Heart left ventricle (tissue), 16 donors: ENCODE measurements at regions of chr2 and their contacts with region 1.

Region 1: DNA sequence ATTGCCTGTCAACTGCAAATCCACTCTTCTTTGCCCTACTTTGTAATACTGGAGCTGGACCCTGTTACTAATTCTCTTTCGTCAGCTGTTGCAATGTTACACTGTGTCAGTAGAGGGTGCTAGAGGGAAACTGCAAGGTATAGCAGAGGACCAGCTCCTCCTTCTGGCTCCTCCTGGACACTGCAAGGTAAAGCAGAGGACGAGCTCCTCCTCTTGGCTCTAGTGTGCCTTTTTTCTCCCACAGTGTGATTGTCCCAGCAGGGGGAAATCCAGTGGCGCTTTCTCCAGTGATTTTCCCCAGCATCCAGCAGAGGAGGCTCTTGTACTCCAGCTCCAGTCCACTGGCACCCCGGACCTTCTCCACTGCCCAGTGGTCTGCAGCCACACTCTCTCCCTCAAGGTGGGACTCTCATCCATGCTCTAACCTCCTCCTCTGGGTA is 95.6 kb downstream of the CAPN13 start:
- DNase-seq: peak; percentile 84 to 89 (median 85)
- ATAC-seq: peak; percentile 28 to 80 (median 74)
- H3K4me3 ChIP-seq: no peak overlapping the region
- H3K27ac ChIP-seq: no peak overlapping the region
- H3K4me1 ChIP-seq: peaks cover 0 to 20% (median 4%) of the 10 kb centered on the region in 12 donors
- H3K27me3 ChIP-seq: no peaks in the 10 kb centered on the region
- CTCF ChIP-seq: peak; percentile 97 to 100 (median 99)
- POLR2A ChIP-seq: no peak

Region 2: DNA sequence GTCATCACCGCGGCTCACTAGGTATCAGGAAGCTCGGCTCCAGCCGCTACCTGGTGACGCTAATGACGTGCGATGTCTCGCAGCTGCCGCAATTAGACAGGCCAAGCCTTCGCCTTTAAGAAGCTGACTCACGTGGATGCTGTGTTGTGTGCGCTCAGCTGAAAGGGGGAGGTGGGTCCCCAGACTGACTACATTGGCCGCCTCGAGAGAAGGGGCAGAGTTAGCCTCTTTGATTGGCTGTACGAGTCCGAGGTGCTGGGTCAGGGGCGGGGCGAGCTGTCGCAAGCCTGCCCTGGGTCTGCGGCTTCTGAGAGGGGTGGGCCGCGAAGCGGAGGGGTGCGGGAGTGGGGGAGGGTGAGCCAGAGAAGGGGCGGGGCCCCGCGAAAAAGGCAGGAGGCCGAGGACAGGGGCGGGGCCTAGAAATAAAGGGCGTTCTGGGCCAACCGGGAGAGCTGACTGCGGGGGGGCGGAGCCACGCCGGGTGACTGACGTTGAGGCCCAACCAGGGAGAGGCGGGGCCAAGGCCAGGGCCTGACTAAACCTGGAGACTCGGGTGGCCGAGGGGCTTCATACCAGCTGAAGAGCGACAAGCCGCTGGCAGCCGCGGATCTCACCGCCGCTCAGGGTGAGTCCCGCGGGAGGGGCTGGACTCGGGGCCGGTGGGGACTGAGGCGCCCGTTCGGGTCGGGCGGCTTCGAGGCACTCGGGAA is 565.1 kb before region 1 on chr2 and contains the start of gene YPEL5:
- intact Hi-C with region 1: no loop called
- DNase-seq: peak; percentile 99 to 100 (median 99)
- ATAC-seq: peak; percentile 96 to 99 (median 98)
- H3K4me3 ChIP-seq: peak within 1 kb of the TSS; percentile 72 to 99 (median 96)
- H3K27ac ChIP-seq: peak within 1 kb of the TSS; percentile 93 to 100 (median 99)
- H3K4me1 ChIP-seq: peaks cover 5 to 45% (median 39%) of the 10 kb centered on the region in 12 donors
- H3K27me3 ChIP-seq: no peaks in the 10 kb centered on the region
- CTCF ChIP-seq: no peak
- POLR2A ChIP-seq: peak; percentile 85 to 93
- total RNA-seq, gene YPEL5: 44.7 to 90.6 (median 66.5) TPM

Region 3: GRCh38 chr2:30172627-30173026 is 539.0 kb before region 1 on chr2:
- intact Hi-C with region 1: loop called in 7 of 10 experiments (anchors 2 to 5 kb)
- DNase-seq: no peak
- ATAC-seq: no peak
- H3K4me3 ChIP-seq: no peak overlapping the region
- H3K27ac ChIP-seq: no peak overlapping the region
- H3K4me1 ChIP-seq: no peaks in the 10 kb centered on the region
- H3K27me3 ChIP-seq: no peaks in the 10 kb centered on the region
- CTCF ChIP-seq: no peak
- POLR2A ChIP-seq: no peak

Region 4: DNA sequence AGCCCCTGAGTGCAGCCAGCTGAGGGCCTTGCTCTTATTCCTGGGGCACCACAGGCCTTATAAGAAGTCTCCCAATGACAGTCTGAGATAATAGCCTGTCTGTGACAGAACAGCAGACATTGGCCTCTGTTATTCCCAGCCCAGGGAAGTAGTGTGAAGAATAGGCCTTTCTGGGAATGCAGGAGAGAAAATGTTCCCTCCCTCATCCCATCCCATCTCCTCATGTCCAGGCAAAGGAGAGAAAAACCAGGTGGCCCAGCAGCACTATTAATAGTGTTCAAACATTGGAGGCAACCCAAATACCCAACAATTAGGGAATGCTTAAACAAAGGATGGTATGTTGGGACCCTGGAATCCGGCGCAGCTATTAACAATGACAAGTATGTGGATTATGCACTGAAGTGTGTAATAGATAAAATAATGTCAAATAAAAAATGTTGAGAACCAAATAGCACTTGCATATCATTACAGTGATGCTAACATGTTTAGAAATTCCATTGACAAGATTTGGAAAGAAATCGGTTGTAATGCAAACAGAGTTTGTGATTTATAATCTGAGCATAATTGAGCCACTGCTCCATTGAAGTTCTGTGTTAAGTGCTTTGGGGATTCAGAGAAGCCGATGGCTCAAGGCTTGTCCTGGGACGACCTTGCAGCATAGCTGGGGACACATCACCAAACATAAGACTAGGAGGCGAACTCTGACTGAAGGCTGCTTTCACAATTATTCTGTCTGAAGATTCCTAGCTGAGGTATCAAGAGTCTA is 411.0 kb before region 1 on chr2:
- intact Hi-C with region 1: no loop called
- DNase-seq: peak in 4 of 5 donors; percentile 32 to 52 (median 42)
- ATAC-seq: peak; percentile 77 to 91 (median 89)
- H3K4me3 ChIP-seq: peak overlapping the region in 7 of 12 donors; percentile 8 to 42 (median 34)
- H3K27ac ChIP-seq: peak overlapping the region; percentile 25 to 93 (median 83)
- H3K4me1 ChIP-seq: peaks cover 0 to 29% (median 17%) of the 10 kb centered on the region in 12 donors
- H3K27me3 ChIP-seq: no peaks in the 10 kb centered on the region
- CTCF ChIP-seq: no peak
- POLR2A ChIP-seq: no peak

Region 5: GRCh38 chr2:30346471-30347169 is 365.0 kb before region 1 on chr2:
- intact Hi-C with region 1: loop called in 3 of 10 experiments (anchors 5 to 10 kb)
- DNase-seq: peak; percentile 85 to 92 (median 88)
- ATAC-seq: peak; percentile 96 to 98 (median 96)
- H3K4me3 ChIP-seq: peak overlapping the region; percentile 5 to 63 (median 54)
- H3K27ac ChIP-seq: peak overlapping the region; percentile 69 to 96 (median 86)
- H3K4me1 ChIP-seq: peaks cover 8 to 55% (median 37%) of the 10 kb centered on the region in 12 donors
- H3K27me3 ChIP-seq: no peaks in the 10 kb centered on the region
- CTCF ChIP-seq: no peak
- POLR2A ChIP-seq: peak in 1 of 2 donors; percentile 69

Region 6: DNA sequence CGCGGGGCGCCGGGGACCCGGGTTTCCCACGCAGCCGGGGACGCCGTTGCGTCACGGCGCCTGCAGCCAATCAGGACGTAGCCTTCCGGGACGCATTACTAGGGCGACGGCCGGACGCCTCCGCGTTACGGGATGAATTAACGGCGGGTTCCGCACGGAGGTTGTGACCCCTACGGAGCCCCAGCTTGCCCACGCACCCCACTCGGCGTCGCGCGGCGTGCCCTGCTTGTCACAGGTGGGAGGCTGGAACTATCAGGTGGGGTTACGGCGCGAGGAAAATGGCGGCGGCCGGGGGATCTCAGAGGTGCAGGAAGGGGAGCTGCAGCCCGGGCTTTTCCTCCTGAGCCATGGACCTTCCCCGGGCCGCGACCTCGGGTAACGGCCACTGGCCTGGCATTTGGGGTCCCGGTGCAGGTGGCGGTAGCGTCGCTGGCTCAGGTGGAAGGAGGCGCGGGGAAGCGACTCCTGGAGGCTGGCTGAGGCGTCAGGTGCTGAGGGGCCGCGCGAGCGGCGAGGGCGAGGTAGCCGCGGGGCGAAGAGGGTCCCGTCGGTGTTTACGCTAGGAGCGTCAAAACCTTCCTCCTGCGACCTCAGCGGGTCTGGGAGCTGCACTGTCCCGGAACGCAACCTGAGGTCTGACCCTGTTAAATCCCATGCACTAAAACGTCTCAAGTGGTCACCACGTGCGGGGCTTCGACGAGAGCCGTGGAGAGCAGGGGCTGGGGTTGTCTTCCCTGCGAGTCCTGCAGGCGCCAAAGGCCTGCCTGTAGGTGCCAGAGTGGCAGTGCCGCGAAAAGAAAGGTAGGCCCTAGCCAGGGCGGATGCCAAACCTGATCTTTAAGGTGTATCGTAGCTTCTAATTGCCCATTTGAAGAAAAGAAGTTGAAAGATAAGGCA is 264.3 kb before region 1 on chr2 and contains the start of gene LCLAT1:
- intact Hi-C with region 1: loop called in 1 of 10 experiments (anchors 10 kb)
- DNase-seq: peak; percentile 87 to 93 (median 87)
- ATAC-seq: peak; percentile 84 to 98 (median 98)
- H3K4me3 ChIP-seq: peak within 1 kb of the TSS; percentile 68 to 99 (median 91)
- H3K27ac ChIP-seq: peak within 1 kb of the TSS; percentile 49 to 91 (median 86)
- H3K4me1 ChIP-seq: peaks cover 0 to 30% (median 13%) of the 10 kb centered on the region in 12 donors
- H3K27me3 ChIP-seq: no peaks in the 10 kb centered on the region
- CTCF ChIP-seq: peak in 3 of 12 donors; percentile 8 to 20 (median 10)
- POLR2A ChIP-seq: peak in 1 of 2 donors; percentile 59
- total RNA-seq, gene LCLAT1: 32.6 to 70.2 (median 46.9) TPM

Region 7: DNA sequence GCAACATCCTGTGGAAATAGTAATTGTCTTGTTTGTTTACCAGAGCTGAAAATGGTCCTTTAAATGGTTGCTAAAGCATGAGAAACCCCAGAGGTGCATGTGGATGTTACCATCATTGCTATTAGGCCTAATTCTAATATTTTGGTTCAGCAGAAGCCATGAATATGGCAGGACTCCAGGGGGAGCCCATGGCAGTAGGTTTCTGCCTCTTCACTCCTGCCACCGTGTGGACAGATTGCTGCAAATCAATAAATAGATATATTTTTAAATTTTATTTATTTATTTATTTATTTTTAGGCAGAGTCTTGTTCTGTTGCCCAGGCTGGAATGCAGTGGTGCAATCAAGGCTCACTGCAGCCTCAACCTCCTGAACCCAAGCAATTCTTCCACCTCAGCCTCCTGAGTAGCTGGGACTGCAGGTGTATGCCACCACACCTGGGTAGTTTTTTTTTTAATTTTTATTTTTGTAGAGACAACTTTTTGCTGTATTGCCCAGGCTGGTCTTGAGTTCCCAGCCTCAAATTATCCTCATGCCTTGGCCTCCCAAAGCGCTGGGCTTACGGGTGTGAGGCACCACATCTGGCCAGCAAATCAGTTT is 150.5 kb after region 1 on chr2:
- intact Hi-C with region 1: loop called in 8 of 10 experiments (anchors 2 to 5 kb)
- DNase-seq: peak in 4 of 5 donors; percentile 42 to 72 (median 52)
- ATAC-seq: peak in 1 of 4 donors; percentile 49
- H3K4me3 ChIP-seq: no peak overlapping the region
- H3K27ac ChIP-seq: no peak overlapping the region
- H3K4me1 ChIP-seq: peaks cover 0 to 5% (median 0%) of the 10 kb centered on the region in 12 donors
- H3K27me3 ChIP-seq: no peaks in the 10 kb centered on the region
- CTCF ChIP-seq: peak; percentile 49 to 81 (median 66)
- POLR2A ChIP-seq: no peak

Region 8: GRCh38 chr2:31523871-31524492 is 812.3 kb after region 1 on chr2:
- intact Hi-C with region 1: loop called in 8 of 10 experiments (anchors 5 to 10 kb)
- DNase-seq: no peak
- ATAC-seq: no peak
- H3K4me3 ChIP-seq: no peak overlapping the region
- H3K27ac ChIP-seq: no peak overlapping the region
- H3K4me1 ChIP-seq: no peaks in the 10 kb centered on the region
- H3K27me3 ChIP-seq: no peaks in the 10 kb centered on the region
- CTCF ChIP-seq: peak; percentile 50 to 76 (median 67)
- POLR2A ChIP-seq: no peak